CD4-positive, alpha-beta memory T cell (primary cell): ENCODE measurements at regions of chr19 and their contacts with region 1.

Region 1: GRCh38 chr19:47745010-47745901 is at the start of gene NOP53:
- DNase-seq: peak; percentile 97 to 98 (median 97)
- H3K4me3 ChIP-seq: peak within 1 kb of the TSS; percentile 7 to 91
- H3K4me3 Mint-ChIP-seq: peak within 1 kb of the TSS; percentile 97 to 100 (median 99)
- H3K27ac ChIP-seq: peak within 1 kb of the TSS; percentile 98
- H3K27ac Mint-ChIP-seq: peak within 1 kb of the TSS; percentile 98 to 100 (median 100)
- H3K4me1 ChIP-seq: peaks cover 54% of the 10 kb centered on the region
- H3K4me1 Mint-ChIP-seq: peaks cover 18 to 49% (median 30%) of the 10 kb centered on the region in 4 donors
- H3K27me3 ChIP-seq: no peaks in the 10 kb centered on the region
- H3K27me3 Mint-ChIP-seq: peaks cover 0 to 3% of the 10 kb centered on the region in 2 donors
- total RNA-seq, gene NOP53: 863 to 875 TPM

Region 2: DNA sequence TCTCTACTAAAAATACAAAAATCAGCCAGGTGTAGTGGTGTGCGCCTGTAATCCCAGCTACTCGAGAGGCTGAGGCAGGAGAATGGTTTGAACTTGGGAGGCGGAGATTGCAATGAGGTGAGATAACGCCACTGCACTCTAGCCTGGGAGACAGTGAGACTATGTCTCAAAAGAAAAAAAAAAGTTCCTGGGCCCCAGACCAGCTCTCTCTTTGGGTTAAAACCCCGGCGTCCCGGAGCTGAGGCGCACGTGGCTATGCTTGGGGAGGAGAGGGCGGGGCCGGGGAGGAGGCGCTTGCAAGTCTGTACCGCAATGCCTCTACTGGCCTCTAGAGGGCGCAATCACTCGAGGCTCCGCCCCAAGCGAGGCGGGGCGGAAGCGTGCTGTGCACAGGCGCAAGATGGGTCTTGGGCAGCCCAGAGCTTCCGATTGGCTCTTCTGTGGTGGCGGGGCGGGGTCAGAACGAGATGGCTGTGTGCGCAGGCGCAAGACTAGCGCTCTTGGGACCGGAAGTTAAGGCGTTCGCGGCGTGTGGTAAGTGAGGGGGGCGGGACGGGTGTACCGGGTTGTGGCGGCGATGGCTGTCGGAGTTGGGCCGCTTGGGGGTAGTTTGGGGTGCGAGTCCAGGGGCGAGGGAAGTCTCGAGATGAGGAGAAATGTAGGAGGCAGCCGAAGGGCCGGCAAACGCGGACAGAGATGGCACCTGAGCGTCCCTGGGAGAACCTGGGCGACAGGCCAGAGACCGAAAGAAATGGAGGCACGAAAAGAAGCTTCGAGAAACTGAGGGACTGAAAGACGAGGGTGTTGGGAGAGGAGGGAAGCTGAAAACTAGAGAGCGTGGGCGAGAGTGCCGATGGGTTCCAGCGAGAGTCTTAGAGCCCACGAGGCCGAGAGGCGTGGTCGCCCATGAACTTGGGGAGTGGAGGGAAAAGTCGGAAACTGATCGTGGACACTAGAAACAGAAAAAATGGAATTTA is 396.1 kb before region 1 on chr19 and contains the start of gene DHX34:
- CTCF ChIA-PET with region 1: no interaction called
- POLR2A ChIA-PET with region 1: interaction called, 3 read pairs
- intact Hi-C with region 1: loop called (anchors 2 kb)
- DNase-seq: peak; percentile 99 to 100 (median 99)
- H3K4me3 ChIP-seq: peak within 1 kb of the TSS; percentile 67 to 70
- H3K4me3 Mint-ChIP-seq: peak within 1 kb of the TSS; percentile 88 to 99 (median 98)
- H3K27ac ChIP-seq: peak within 1 kb of the TSS; percentile 80
- H3K27ac Mint-ChIP-seq: peak within 1 kb of the TSS; percentile 86 to 99 (median 97)
- H3K4me1 ChIP-seq: peaks cover 27% of the 10 kb centered on the region
- H3K4me1 Mint-ChIP-seq: peaks cover 23 to 48% (median 34%) of the 10 kb centered on the region in 4 donors
- H3K27me3 ChIP-seq: no peaks in the 10 kb centered on the region
- H3K27me3 Mint-ChIP-seq: peaks cover 0 to 2% of the 10 kb centered on the region in 2 donors
- total RNA-seq, gene DHX34: 26.5 to 27.3 TPM

Region 3: DNA sequence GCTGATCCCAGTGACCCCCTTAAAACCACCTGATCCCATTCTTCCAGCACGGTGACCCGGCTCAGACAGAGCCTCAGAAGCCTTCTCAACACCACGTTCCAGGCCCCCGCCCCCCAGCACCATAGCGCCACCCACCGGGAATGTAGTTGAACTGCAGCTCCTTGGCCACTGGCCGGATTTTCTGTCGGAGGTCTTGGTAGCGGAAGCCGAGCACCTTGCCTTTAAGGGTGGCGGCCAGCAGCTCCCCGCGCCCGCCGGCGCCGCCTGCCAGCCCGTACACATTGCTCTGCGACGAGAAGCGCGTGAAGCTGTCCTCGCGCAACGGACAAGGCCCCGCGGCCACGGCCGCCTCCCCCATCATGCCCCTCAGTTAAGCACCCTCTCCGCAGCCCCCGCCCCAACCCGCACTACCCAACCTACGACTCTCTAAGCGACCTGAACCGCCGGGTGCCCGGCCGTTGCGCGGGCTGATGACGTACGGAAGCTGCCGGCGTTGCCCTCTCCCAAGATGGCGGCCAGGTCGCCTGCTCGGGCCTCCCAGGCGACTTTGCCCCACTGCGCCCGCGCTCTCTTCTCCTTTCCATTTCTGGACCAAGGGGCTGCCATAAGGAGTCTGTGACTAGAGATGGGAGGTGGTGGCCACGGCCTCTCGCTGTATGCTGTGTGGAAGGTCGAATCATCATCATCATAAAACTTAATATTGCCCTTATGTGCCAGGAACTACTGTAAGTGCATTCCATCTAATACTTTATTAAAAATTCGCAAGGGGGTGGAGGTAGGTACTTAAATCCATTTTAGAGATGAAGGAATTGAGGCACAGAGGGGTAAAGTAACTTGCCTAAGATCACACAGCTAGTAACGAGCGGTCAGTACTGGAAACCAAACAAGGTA is 261.2 kb before region 1 on chr19 and contains the start of gene KPTN:
- CTCF ChIA-PET with region 1: no interaction called
- POLR2A ChIA-PET with region 1: interaction called, 14 read pairs
- intact Hi-C with region 1: loop called (anchors 1 kb)
- DNase-seq: peak; percentile 87 to 92 (median 90)
- H3K4me3 ChIP-seq: peak within 1 kb of the TSS; percentile 44 to 72
- H3K4me3 Mint-ChIP-seq: peak within 1 kb of the TSS; percentile 91 to 100 (median 98)
- H3K27ac ChIP-seq: peak within 1 kb of the TSS; percentile 86
- H3K27ac Mint-ChIP-seq: peak within 1 kb of the TSS; percentile 96 to 100 (median 99)
- H3K4me1 ChIP-seq: peaks cover 21% of the 10 kb centered on the region
- H3K4me1 Mint-ChIP-seq: peaks cover 16 to 42% (median 22%) of the 10 kb centered on the region in 4 donors
- H3K27me3 ChIP-seq: no peaks in the 10 kb centered on the region
- H3K27me3 Mint-ChIP-seq: no peaks in the 10 kb centered on the region
- total RNA-seq, gene KPTN: 4.0 to 4.3 TPM

Region 4: DNA sequence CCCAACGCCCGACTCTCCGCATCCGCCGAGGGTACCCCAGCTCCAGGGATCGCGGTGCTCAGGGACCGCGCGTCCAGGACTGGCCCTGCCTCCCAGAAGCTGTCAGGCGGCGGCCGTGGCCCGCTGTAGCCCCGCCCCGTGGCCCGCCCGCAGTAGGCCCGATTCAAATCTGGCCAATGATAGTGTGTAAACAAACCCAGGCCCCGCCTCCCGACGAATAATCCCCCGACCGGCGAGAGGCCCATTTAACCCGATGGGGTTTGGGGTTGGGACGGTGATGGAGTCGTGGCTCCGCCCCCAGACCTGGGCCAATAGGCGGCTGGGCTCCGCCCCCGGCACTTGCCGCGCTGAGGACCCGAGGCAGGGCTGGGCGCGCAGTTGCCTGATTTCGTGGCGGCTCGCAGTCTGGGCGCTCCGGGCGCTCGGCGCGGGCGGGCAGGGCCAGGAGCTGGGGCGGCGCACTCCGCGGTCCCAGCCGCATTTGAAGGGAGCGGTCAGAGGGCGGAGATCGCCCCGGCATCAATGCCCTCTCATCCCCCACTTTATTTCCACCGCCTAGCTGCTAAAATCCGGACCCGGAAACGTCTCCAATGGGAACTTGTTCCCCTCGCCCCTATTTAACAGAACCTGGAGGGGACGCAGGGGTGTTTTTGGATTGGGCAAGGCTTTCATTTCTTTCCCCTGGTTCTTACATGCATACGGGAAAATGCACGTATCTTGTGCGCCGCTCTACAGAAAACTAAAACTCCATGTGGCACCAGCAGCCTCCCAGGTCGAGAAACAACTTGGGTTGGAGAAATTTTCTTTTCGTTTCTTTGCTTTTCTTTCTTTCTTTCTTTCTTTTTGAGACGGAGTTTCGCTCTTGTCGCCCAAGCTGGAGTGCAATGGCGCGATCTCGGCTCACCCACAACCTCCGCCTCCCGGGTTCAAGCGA is 144.7 kb before region 1 on chr19:
- CTCF ChIA-PET with region 1: no interaction called
- POLR2A ChIA-PET with region 1: interaction called, 5 read pairs
- intact Hi-C with region 1: loop called (anchors 10 kb)
- DNase-seq: peak; percentile 96 to 99 (median 98)
- H3K4me3 ChIP-seq: peak overlapping the region; percentile 49 to 67
- H3K4me3 Mint-ChIP-seq: peak overlapping the region; percentile 85 to 90 (median 86)
- H3K27ac ChIP-seq: peak overlapping the region; percentile 74
- H3K27ac Mint-ChIP-seq: peak overlapping the region; percentile 80 to 94 (median 90)
- H3K4me1 ChIP-seq: peaks cover 19% of the 10 kb centered on the region
- H3K4me1 Mint-ChIP-seq: peaks cover 6 to 40% (median 20%) of the 10 kb centered on the region in 4 donors
- H3K27me3 ChIP-seq: no peaks in the 10 kb centered on the region
- H3K27me3 Mint-ChIP-seq: no peaks in the 10 kb centered on the region

Region 5: DNA sequence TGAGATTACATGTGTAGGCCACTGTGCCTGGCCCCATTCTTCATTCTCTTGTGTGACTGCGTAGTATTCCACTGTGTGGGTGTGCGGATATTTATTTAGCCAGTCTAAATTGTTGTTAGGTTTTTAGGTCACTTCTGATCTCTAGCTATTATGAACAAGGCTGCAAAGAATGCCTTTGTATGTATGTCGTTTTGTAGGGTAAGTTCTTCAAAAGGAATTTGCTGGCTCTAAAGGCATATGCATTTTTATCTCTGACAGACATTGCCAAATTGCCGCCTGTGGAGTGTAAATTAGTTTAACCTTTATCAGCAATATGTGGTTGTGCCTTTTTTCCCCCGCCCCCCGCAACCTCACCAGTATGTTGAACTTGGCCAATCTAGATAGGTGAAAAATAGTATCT is 62.3 kb before region 1 on chr19:
- CTCF ChIA-PET with region 1: no interaction called
- POLR2A ChIA-PET with region 1: no interaction called
- intact Hi-C with region 1: no loop called
- DNase-seq: no peak
- H3K4me3 ChIP-seq: no peak overlapping the region
- H3K4me3 Mint-ChIP-seq: no peak overlapping the region
- H3K27ac ChIP-seq: no peak overlapping the region
- H3K27ac Mint-ChIP-seq: no peak overlapping the region
- H3K4me1 ChIP-seq: no peaks in the 10 kb centered on the region
- H3K4me1 Mint-ChIP-seq: peaks cover 2 to 9% (median 5%) of the 10 kb centered on the region in 4 donors
- H3K27me3 ChIP-seq: no peaks in the 10 kb centered on the region
- H3K27me3 Mint-ChIP-seq: no peaks in the 10 kb centered on the region

Region 6: DNA sequence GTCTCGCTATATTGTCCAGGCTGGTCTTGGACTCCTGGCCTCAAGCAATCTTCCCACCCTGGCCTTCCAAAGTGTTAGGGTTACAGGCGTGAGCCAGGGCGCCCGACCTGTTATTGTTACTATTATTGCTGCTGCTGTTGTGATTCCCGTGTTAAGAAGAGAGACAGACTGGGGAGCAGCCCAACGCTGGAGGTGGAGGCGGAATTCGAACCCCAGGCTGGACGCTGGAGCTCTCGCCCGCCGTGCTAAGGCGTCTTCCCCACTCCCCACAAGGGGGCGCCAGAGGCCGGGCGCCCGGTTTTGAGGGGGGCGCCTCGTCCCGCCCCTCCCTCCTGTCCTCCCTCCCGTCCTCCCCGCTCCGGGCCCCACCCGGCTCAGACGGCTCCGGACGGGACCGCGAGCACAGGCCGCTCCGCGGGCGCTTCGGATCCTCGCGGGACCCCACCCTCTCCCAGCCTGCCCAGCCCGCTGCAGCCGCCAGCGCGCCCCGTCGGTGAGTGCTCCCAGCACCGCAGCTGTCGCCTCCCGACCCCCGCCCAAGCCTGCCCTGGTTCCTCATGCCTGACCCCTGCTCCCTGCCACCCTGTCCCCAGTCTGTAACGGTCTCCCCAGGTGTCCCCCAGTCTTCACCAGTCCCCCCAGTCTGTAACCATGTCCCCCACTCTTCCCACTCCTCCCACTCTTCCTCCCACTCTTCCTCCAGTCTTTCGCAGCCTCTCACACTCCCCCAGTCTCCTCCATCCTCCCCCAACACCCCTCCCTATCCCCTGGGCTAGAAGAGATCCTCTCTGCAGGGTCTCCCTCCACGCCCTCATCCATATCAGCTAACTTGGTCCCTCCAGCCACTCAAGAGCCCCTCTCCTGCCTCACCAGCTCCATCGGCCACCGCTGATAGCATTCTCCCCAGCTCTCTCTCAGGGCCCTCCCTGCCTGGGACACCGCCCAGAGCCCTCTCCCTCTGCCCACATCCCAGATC is 31.9 kb before region 1 on chr19 and contains the start of gene EHD2:
- CTCF ChIA-PET with region 1: interaction called, 44 read pairs
- POLR2A ChIA-PET with region 1: interaction called, 3 read pairs
- intact Hi-C with region 1: loop called (anchors 1 kb)
- DNase-seq: peak in 4 of 5 donors; percentile 11 to 34 (median 21)
- H3K4me3 ChIP-seq: no peak within 1 kb of the TSS
- H3K4me3 Mint-ChIP-seq: peak within 1 kb of the TSS in 3 of 8 donors; percentile 6 to 61 (median 43)
- H3K27ac ChIP-seq: no peak within 1 kb of the TSS
- H3K27ac Mint-ChIP-seq: no peak within 1 kb of the TSS
- H3K4me1 ChIP-seq: peaks cover 4% of the 10 kb centered on the region
- H3K4me1 Mint-ChIP-seq: peaks cover 0 to 3% (median 2%) of the 10 kb centered on the region in 4 donors
- H3K27me3 ChIP-seq: no peaks in the 10 kb centered on the region
- H3K27me3 Mint-ChIP-seq: peaks cover 28 to 31% of the 10 kb centered on the region in 2 donors
- total RNA-seq, gene EHD2: not detected